Activated T-helper 1 cell treated with anti-CD3 and anti-CD28 coated beads, Interleukin-12 subunit alpha, Interleukin-12 subunit beta, Interleukin-2, Interleukin-4 antibody, amounts not matched to agents 30 ng/mL and 10 ng/mL and 1 ng/mL, durations not matched to agents 14 hours and 24 hours and 36 hours (primary cell): ENCODE measurements at regions of chr2 and their contacts with region 1.

Region 1: DNA sequence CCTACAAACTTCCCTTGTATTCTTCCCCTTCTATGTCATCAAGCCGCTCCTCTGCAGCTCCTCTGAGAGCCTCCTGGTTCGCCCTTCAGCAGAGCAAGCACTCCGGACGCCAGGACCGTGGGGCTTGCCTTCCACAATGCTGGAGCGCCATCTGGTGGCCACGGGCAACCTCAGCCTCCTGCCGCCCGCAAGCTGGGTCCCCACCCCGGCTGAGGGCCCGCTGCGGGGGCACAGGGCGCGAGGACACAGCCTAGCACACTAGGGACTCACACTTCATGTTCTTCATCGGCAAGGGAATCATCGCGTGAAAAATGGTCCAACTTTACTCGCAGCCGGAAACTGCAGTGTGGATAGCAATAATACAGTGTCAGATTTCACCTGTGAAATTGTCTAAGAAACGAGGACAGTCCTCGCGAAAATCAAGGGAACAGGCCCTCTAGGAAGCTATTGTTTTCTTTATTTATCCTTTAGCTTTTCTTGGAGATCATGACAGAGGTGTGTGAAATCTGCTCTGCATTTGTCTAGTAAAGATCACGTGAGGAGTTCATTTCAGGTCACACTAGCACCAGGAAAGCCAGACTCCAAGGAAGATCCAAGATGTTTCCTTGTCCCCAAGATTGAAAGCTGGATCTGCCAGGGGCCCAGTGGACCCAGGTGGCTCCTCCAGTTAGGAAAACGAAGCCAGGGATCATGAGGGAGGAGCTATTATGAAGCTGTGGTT is 5.8 kb downstream of the PRLH start:
- DNase-seq: peak; percentile 72
- H3K4me3 Mint-ChIP-seq: no peak overlapping the region
- H3K27ac Mint-ChIP-seq: no peak overlapping the region
- H3K4me1 Mint-ChIP-seq: peaks cover 7% of the 10 kb centered on the region
- H3K27me3 Mint-ChIP-seq: peaks cover 7% of the 10 kb centered on the region

Region 2: GRCh38 chr2:237085248-237086221 is 486.6 kb before region 1 on chr2 and contains the start of gene COPS8:
- intact Hi-C with region 1: loop called (anchors 1 kb)
- DNase-seq: peak; percentile 90
- H3K4me3 Mint-ChIP-seq: peak within 1 kb of the TSS; percentile 98
- H3K27ac Mint-ChIP-seq: peak within 1 kb of the TSS; percentile 98
- H3K4me1 Mint-ChIP-seq: peaks cover 15% of the 10 kb centered on the region
- H3K27me3 Mint-ChIP-seq: no peaks in the 10 kb centered on the region
- total RNA-seq, gene COPS8: 59.2 and 63.3 TPM in 2 replicates

Region 3: GRCh38 chr2:237122214-237122666 is 449.9 kb before region 1 on chr2:
- intact Hi-C with region 1: loop called (anchors 1 kb)
- DNase-seq: peak; percentile 11
- H3K4me3 Mint-ChIP-seq: no peak overlapping the region
- H3K27ac Mint-ChIP-seq: no peak overlapping the region
- H3K4me1 Mint-ChIP-seq: no peaks in the 10 kb centered on the region
- H3K27me3 Mint-ChIP-seq: peaks cover 4% of the 10 kb centered on the region

Region 4: DNA sequence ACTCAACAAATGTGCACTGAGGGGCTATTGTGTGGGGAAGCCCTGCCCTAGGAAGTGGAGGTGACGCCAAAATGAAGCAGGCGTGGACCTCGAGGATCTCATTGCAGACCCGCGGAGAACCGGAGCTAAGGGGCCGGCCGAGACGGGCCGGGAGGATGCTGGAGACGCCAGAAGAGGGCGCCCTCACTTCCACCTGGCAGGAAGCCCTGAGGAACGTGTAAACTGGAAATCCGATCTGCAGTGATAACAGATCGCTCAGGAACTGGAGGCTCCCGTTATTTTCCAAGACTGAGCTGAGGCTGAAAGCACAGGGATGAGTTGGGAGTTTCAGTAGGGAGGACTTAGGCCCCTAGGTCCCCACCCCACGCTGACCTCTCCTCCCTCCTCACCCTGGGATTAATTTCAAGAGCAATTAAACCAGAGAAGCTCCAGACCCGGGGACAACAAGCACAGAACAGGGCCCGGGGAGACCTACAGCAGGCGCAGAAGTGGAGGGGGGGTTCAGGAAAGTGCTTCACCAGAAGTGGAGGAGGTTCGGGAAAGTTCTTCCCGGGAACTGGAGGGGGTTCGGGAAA is 150.6 kb before region 1 on chr2:
- intact Hi-C with region 1: loop called (anchors 1 kb)
- DNase-seq: peak; percentile 61
- H3K4me3 Mint-ChIP-seq: peak overlapping the region; percentile 53
- H3K27ac Mint-ChIP-seq: peak overlapping the region; percentile 35
- H3K4me1 Mint-ChIP-seq: peaks cover 26% of the 10 kb centered on the region
- H3K27me3 Mint-ChIP-seq: peaks cover 27% of the 10 kb centered on the region

Region 5: DNA sequence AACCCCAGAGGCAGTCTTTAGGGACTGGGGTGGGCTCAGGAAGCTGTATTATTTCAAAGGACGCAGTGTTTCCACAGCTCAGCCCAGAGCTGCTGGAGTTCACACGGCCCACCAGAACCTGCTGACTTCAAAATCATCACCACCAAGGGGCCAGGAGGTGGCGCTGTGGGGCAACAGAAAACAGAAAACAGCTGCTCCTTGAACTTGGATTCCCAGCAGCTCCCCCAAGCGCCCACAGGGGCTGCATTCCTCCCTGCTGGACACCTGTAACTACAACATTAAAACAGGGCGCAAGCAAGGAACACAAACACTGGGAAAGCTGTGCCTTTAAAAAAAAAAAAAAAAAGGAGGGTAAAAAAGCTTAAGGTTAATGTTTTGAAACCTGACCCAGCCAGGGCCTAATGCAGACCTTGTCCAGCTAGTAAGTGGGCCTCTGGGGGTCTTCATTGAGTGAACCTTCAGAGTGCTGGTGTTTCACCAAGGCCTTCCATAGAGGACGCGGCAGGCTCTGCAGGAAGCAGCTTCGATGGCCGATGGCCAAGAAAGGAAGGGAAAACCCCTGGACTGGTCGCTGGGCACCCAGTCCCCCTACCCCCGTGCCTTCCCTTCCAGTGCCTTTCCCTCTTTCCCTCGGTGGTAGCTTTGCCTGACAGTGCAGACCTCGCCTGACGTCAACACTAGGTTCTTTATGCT is 59.3 kb before region 1 on chr2:
- intact Hi-C with region 1: loop called (anchors 1 kb)
- DNase-seq: peak; percentile 57
- H3K4me3 Mint-ChIP-seq: no peak overlapping the region
- H3K27ac Mint-ChIP-seq: no peak overlapping the region
- H3K4me1 Mint-ChIP-seq: no peaks in the 10 kb centered on the region
- H3K27me3 Mint-ChIP-seq: peaks cover 3% of the 10 kb centered on the region

Region 6: GRCh38 chr2:238003234-238004031 is 431.3 kb after region 1 on chr2:
- intact Hi-C with region 1: no loop called
- DNase-seq: no peak
- H3K4me3 Mint-ChIP-seq: peak overlapping the region; percentile 31
- H3K27ac Mint-ChIP-seq: peak overlapping the region; percentile 98
- H3K4me1 Mint-ChIP-seq: peaks cover 64% of the 10 kb centered on the region
- H3K27me3 Mint-ChIP-seq: no peaks in the 10 kb centered on the region